Lower leg skin (tissue), 4 donors: ENCODE measurements at regions of chr4 and their contacts with region 1.

Region 1: GRCh38 chr4:156968479-156968984 is 3.1 kb downstream of the PDGFC start:
- DNase-seq: peak; percentile 73 to 89
- H3K4me3 ChIP-seq: no peak overlapping the region
- CTCF ChIP-seq: peak in 1 of 3 donors; percentile 51
- POLR2A ChIP-seq: no peak

Region 2: DNA sequence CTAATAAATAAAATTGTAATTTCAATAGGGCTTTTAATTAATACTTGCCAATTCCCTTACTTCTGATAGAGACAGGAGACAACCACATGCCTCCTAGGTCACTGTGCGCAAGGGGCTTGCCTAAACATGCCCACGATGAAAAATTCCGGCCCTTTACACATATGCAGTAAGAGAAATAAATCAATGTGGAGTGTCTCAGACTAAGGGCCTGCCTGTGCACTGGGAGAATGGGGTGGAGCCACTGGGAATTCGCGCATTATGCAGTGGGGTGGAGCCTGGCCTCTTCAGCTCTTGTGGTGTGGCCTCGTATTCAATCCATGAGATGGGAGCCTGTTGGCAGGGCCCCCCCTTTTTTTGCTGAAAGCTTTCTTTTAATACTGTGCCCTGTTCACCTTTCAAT is 481.4 kb before region 1 on chr4:
- intact Hi-C with region 1: loop called (anchors 10 kb)
- DNase-seq: no peak
- H3K4me3 ChIP-seq: no peak overlapping the region
- CTCF ChIP-seq: no peak
- POLR2A ChIP-seq: no peak

Region 3: GRCh38 chr4:156654410-156654809 is 314.1 kb before region 1 on chr4:
- intact Hi-C with region 1: no loop called
- DNase-seq: no peak
- H3K4me3 ChIP-seq: no peak overlapping the region
- CTCF ChIP-seq: no peak
- POLR2A ChIP-seq: no peak